Activated B cell treated with CpG ODN at 0.5 μM for 24 hours (primary cell): ENCODE measurements at regions of chr11 and their contacts with region 1.

Region 1: DNA sequence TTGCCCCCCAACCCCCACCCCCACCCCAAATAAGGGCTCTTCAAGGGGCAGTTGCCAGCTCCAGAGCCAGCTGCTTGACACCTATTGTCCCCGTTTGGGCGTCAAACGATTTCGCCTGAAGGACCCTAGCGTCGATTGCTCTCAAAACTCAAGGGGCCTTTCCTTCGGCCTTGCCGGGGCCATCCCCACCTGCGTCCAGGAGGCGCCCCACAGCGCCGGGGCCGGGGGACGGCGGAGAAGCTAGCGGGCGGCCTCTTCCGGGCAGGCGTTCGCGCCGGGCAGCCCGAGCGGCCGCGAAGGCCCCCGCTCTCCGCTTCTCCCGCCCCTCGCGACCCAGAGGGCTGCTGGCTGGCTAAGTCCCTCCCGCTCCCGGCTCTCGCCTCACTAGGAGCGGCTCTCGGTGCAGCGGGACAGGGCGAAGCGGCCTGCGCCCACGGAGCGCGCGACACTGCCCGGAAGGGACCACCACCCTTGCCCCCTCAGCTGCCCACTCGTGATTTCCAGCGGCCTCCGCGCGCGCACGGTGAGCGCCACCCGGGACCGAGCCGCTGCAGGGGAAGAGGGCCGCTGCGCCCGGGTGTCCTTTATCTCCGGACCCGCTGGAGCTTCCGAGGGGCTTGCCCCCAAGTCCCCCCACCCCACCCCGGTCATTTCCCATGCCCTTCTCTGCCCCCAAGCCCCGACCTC is at the start of gene CAPRIN1:
- DNase-seq: peak; percentile 87
- ATAC-seq: peak; percentile 73
- H3K4me3 Mint-ChIP-seq: peak within 1 kb of the TSS; percentile 99
- H3K27ac Mint-ChIP-seq: peak within 1 kb of the TSS; percentile 98
- H3K4me1 Mint-ChIP-seq: peaks cover 37% of the 10 kb centered on the region
- H3K27me3 Mint-ChIP-seq: no peaks in the 10 kb centered on the region
- CTCF ChIP-seq: no peak
- total RNA-seq, gene CAPRIN1: 152 and 158 TPM in 2 replicates

Region 2: DNA sequence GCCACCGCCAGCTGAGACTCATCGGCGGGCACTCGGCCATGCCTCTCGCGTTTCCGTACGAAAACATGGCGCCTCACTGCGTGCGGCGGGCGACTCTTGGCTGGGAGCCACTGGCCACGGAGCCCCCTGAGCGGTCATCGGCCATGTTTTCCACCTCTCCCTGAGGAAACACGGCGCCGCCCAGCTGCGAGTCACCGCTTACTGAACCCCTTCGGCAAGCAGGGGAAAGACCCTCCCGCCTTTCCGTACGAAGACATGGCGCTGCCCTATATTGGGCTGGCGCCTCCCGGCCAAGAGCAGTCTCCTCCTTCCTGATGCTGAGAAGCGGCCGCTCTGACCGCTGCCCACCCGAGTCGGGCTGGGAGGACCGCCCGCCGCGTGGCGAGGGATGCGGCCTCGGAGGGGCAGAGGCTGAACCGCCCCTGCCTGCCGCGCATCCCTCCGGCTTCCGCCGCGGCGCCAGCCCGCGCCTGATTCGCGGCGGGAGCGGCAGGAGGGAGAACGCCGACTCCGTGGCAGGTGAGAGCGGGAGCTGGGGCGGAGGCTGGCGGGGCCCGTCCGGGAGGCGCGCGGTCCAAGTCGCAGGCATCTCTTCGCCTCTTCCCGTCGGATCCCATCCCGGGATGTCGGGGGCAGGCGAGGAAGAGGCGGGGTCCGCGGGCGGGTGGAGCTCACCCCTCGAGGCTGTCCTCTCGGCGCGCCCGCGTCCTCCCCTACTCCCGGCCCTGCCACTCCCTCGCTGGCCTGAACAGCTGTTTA is 1012.0 kb before region 1 on chr11 and contains the start of gene TCP11L1:
- CTCF ChIA-PET with region 1: no interaction called
- POLR2A ChIA-PET with region 1: no interaction called
- intact Hi-C with region 1: loop called (anchors 1 kb)
- DNase-seq: peak; percentile 77
- ATAC-seq: peak; percentile 85
- H3K4me3 Mint-ChIP-seq: peak within 1 kb of the TSS; percentile 95
- H3K27ac Mint-ChIP-seq: peak within 1 kb of the TSS; percentile 95
- H3K4me1 Mint-ChIP-seq: peaks cover 13% of the 10 kb centered on the region
- H3K27me3 Mint-ChIP-seq: peaks cover 8% of the 10 kb centered on the region
- CTCF ChIP-seq: no peak
- total RNA-seq, gene TCP11L1: 13.5 and 17.7 TPM in 2 replicates

Region 3: GRCh38 chr11:33773987-33774735 is 277.3 kb before region 1 on chr11 and contains the start of gene FBXO3:
- CTCF ChIA-PET with region 1: no interaction called
- POLR2A ChIA-PET with region 1: no interaction called
- intact Hi-C with region 1: loop called (anchors 2 kb)
- DNase-seq: peak; percentile 80
- ATAC-seq: peak; percentile 92
- H3K4me3 Mint-ChIP-seq: peak within 1 kb of the TSS; percentile 96
- H3K27ac Mint-ChIP-seq: peak within 1 kb of the TSS; percentile 94
- H3K4me1 Mint-ChIP-seq: peaks cover 38% of the 10 kb centered on the region
- H3K27me3 Mint-ChIP-seq: peaks cover 15% of the 10 kb centered on the region
- CTCF ChIP-seq: no peak
- total RNA-seq, gene FBXO3: 22.3 and 23.5 TPM in 2 replicates

Region 4: GRCh38 chr11:33996498-33997454 is 54.7 kb before region 1 on chr11:
- CTCF ChIA-PET with region 1: interaction called, 4 read pairs
- POLR2A ChIA-PET with region 1: interaction called, 3 read pairs
- intact Hi-C with region 1: loop called (anchors 1 kb)
- DNase-seq: peak; percentile 41
- ATAC-seq: peak; percentile 98
- H3K4me3 Mint-ChIP-seq: peak overlapping the region; percentile 36
- H3K27ac Mint-ChIP-seq: no peak overlapping the region
- H3K4me1 Mint-ChIP-seq: peaks cover 10% of the 10 kb centered on the region
- H3K27me3 Mint-ChIP-seq: peaks cover 19% of the 10 kb centered on the region
- CTCF ChIP-seq: peak; percentile 40

Region 5: GRCh38 chr11:34105079-34105956 is 53.8 kb after region 1 on chr11 and contains the start of gene NAT10:
- CTCF ChIA-PET with region 1: interaction called, 4 read pairs
- POLR2A ChIA-PET with region 1: interaction called, 95 read pairs
- intact Hi-C with region 1: loop called (anchors 1 kb)
- DNase-seq: peak; percentile 91
- ATAC-seq: peak; percentile 92
- H3K4me3 Mint-ChIP-seq: peak within 1 kb of the TSS; percentile 97
- H3K27ac Mint-ChIP-seq: peak within 1 kb of the TSS; percentile 98
- H3K4me1 Mint-ChIP-seq: peaks cover 41% of the 10 kb centered on the region
- H3K27me3 Mint-ChIP-seq: peaks cover 2% of the 10 kb centered on the region
- CTCF ChIP-seq: no peak
- total RNA-seq, gene NAT10: 107 and 120 TPM in 2 replicates

Region 6: DNA sequence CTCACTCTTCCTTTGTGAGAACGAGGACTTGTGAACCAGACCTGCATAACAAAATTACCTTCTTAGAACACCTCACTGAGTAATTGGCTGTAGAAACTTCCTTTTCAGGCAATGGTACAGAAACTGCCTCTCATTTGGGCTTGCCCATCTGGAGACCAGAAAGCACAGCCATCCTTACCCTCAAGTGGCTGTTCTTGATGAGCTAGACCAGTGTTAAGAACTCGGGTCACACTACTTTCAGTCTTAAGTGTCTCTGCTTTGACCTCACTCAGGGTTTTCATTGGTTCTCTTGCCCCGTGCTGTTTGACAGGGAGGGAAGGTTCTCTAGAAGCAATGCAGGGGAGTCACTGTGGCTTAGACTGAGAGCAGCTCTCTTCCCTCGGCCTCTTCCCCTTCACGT is 83.3 kb after region 1 on chr11:
- CTCF ChIA-PET with region 1: no interaction called
- POLR2A ChIA-PET with region 1: no interaction called
- intact Hi-C with region 1: no loop called
- DNase-seq: no peak
- ATAC-seq: no peak
- H3K4me3 Mint-ChIP-seq: no peak overlapping the region
- H3K27ac Mint-ChIP-seq: no peak overlapping the region
- H3K4me1 Mint-ChIP-seq: peaks cover 6% of the 10 kb centered on the region
- H3K27me3 Mint-ChIP-seq: no peaks in the 10 kb centered on the region
- CTCF ChIP-seq: no peak

Region 7: GRCh38 chr11:34916015-34916842 is 864.7 kb after region 1 on chr11 and contains the starts of genes APIP and PDHX:
- CTCF ChIA-PET with region 1: no interaction called
- POLR2A ChIA-PET with region 1: interaction called, 4 read pairs
- intact Hi-C with region 1: loop called (anchors 5 kb)
- DNase-seq: peak; percentile 93
- ATAC-seq: peak; percentile 96
- H3K4me3 Mint-ChIP-seq: peak within 1 kb of the TSS; percentile 95
- H3K27ac Mint-ChIP-seq: peak within 1 kb of the TSS; percentile 91
- H3K4me1 Mint-ChIP-seq: peaks cover 27% of the 10 kb centered on the region
- H3K27me3 Mint-ChIP-seq: no peaks in the 10 kb centered on the region
- CTCF ChIP-seq: no peak
- total RNA-seq, gene APIP: 17.8 and 18.7 TPM in 2 replicates
- total RNA-seq, gene PDHX: 18.1 and 18.6 TPM in 2 replicates

Region 8: DNA sequence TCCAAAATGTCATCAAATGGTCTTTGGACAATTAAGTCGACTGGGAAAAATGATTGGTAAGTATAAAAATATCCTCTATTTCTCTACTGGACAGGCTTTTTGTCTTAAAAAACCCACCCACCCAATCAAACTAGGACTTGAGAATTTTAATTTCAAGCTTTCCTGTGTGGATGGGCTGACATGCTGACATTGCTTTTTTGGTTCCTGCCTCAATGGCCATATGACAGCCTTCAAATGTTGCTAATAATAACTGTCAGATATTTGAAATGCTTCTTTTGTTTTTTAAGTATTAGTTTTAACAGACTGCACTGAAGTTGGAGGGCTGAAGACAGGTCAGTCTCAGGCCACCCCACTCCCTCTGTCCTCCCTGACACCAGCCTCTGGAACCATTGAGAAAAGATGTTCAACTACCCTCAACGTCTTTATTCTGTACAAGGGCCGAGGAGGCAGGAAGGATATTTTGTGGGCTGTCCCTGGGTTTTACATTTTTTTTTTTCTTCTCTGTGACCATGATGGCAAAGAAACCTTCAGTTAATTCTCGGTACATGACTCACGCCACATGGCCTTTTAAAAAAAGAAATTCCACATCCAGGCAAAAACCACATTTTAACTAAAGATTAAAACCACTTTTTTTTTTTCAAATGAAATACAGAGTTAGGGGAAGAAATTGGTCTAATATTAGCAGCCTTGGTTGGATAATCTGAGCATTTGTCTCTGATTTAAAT is 1237.5 kb after region 1 on chr11:
- CTCF ChIA-PET with region 1: no interaction called
- POLR2A ChIA-PET with region 1: no interaction called
- intact Hi-C with region 1: no loop called
- DNase-seq: no peak
- ATAC-seq: peak; percentile 28
- H3K4me3 Mint-ChIP-seq: no peak overlapping the region
- H3K27ac Mint-ChIP-seq: no peak overlapping the region
- H3K4me1 Mint-ChIP-seq: peaks cover 17% of the 10 kb centered on the region
- H3K27me3 Mint-ChIP-seq: no peaks in the 10 kb centered on the region
- CTCF ChIP-seq: no peak